Right lobe of liver (tissue), 6 donors: ENCODE measurements at regions of chr3 and their contacts with region 1.

Region 1: GRCh38 chr3:34683851-34684250 is 885.4 kb downstream of the PDCD6IP start:
- DNase-seq: peak; percentile 52 to 68 (median 60)
- ATAC-seq: peak; percentile 47 to 65 (median 62)
- H3K4me3 ChIP-seq: no peak overlapping the region
- H3K27ac ChIP-seq: no peak overlapping the region
- H3K4me1 ChIP-seq: no peaks in the 10 kb centered on the region
- H3K27me3 ChIP-seq: no peaks in the 10 kb centered on the region
- CTCF ChIP-seq: peak; percentile 56 to 62 (median 57)
- POLR2A ChIP-seq: no peak

Region 2: DNA sequence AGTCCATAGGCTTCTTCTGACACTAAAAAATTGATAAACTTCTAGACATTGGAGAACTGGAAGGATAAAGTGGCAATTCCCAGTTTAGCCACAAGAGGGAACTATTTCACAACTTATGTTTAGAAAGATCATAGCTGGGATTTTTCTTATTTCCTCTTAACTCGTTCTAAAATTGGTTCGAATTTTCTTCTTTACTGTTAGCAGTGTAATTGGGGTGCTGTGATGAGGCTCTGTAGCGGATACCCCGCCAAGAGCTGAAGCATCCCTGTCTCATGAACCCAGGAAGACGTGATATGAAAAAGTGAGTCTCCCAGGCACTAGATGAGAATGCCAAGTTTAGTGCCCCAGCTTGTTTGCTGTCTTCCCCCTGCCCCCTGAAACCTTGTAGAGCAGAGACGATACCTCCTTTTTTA is 800.3 kb before region 1 on chr3:
- intact Hi-C with region 1: loop called (anchors 10 kb)
- DNase-seq: no peak
- ATAC-seq: peak; percentile 47 to 78 (median 70)
- H3K4me3 ChIP-seq: no peak overlapping the region
- H3K27ac ChIP-seq: no peak overlapping the region
- H3K4me1 ChIP-seq: no peaks in the 10 kb centered on the region
- H3K27me3 ChIP-seq: no peaks in the 10 kb centered on the region
- CTCF ChIP-seq: peak; percentile 76 to 88 (median 84)
- POLR2A ChIP-seq: no peak